ENCODE measurements at regions of chr2 and their contacts with region 1.

Region 1: GRCh38 chr2:16728351-16729136 is 62.9 kb upstream of the CYRIA start:
- DNase-seq: no peak
- H3K4me3 Mint-ChIP-seq: peak overlapping the region; percentile 1
- H3K27ac Mint-ChIP-seq: peak overlapping the region; percentile 70
- H3K4me1 Mint-ChIP-seq: peaks cover 25% of the 10 kb centered on the region
- H3K27me3 Mint-ChIP-seq: no peaks in the 10 kb centered on the region

Region 2: GRCh38 chr2:16665748-16666448 is 62.6 kb before region 1 on chr2 and contains the start of gene CYRIA:
- intact Hi-C with region 1: loop called (anchors 2 kb)
- DNase-seq: peak; percentile 89
- H3K4me3 Mint-ChIP-seq: peak within 1 kb of the TSS; percentile 89
- H3K27ac Mint-ChIP-seq: peak within 1 kb of the TSS; percentile 85
- H3K4me1 Mint-ChIP-seq: peaks cover 24% of the 10 kb centered on the region
- H3K27me3 Mint-ChIP-seq: peaks cover 37% of the 10 kb centered on the region
- total RNA-seq, gene CYRIA: 1.7 and 1.8 TPM in 2 replicates

Region 3: DNA sequence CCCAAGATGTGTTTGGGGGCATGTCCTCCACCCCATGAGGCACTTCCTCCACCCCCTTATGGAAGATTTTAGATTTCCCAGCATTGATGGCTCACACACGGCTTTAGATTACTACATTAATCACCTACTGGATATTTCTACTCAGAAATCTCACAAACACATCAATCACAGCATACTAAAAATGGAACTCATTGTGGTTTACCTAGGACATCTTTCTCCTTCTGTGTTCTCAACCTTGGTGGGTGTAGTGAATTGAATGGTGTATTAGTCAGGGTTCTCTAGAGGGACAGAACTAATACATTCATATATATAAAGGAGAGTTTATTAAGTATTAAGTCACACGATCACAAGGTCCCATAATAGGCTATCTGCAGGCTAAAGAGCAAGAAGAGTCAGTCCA is 19.1 kb after region 1 on chr2:
- intact Hi-C with region 1: loop called (anchors 1 kb)
- DNase-seq: no peak
- H3K4me3 Mint-ChIP-seq: peak overlapping the region; percentile 25
- H3K27ac Mint-ChIP-seq: peak overlapping the region; percentile 63
- H3K4me1 Mint-ChIP-seq: peaks cover 22% of the 10 kb centered on the region
- H3K27me3 Mint-ChIP-seq: peaks cover 2% of the 10 kb centered on the region